Dendritic cell treated with granulocyte-macrophage colony-stimulating factor and Interleukin-4, amounts not matched to agents 40 ng/mL and 50 ng/mL, for 4 days (primary cell): ENCODE measurements at regions of chrX and their contacts with region 1.

Region 1: GRCh38 chrX:23919706-23920320 is 12.0 kb downstream of the CXorf58 start:
- H3K4me3 Mint-ChIP-seq: no peak overlapping the region
- H3K27ac Mint-ChIP-seq: no peak overlapping the region
- H3K4me1 Mint-ChIP-seq: no peaks in the 10 kb centered on the region
- H3K27me3 Mint-ChIP-seq: no peaks in the 10 kb centered on the region

Region 2: GRCh38 chrX:23883737-23884354 is 36.0 kb before region 1 on chrX:
- intact Hi-C with region 1: no loop called
- H3K4me3 Mint-ChIP-seq: peak overlapping the region; percentile 18
- H3K27ac Mint-ChIP-seq: peak overlapping the region; percentile 97
- H3K4me1 Mint-ChIP-seq: peaks cover 37% of the 10 kb centered on the region
- H3K27me3 Mint-ChIP-seq: no peaks in the 10 kb centered on the region

Region 3: DNA sequence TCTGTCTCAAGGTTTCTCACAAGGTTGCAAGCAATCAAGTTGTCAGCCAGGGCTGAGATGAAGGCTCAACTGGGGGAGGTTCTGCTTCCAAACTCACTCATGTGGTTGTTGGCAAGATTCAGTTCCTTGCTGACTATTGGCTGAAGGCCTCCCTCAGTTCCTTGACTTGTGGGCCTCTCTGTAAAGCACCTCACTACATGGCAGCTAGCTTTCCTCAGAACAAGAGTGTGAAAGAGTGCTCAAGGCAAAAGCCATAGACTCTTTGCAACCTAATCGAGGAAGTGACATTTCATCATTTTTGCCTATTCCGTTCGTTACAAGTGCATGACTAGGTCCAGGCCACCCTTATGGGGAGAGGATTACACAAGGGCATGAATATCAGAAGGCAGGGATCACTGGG is 40.0 kb after region 1 on chrX:
- intact Hi-C with region 1: loop called (anchors 10 kb)
- H3K4me3 Mint-ChIP-seq: no peak overlapping the region
- H3K27ac Mint-ChIP-seq: peak overlapping the region; percentile 41
- H3K4me1 Mint-ChIP-seq: no peaks in the 10 kb centered on the region
- H3K27me3 Mint-ChIP-seq: no peaks in the 10 kb centered on the region

Region 4: DNA sequence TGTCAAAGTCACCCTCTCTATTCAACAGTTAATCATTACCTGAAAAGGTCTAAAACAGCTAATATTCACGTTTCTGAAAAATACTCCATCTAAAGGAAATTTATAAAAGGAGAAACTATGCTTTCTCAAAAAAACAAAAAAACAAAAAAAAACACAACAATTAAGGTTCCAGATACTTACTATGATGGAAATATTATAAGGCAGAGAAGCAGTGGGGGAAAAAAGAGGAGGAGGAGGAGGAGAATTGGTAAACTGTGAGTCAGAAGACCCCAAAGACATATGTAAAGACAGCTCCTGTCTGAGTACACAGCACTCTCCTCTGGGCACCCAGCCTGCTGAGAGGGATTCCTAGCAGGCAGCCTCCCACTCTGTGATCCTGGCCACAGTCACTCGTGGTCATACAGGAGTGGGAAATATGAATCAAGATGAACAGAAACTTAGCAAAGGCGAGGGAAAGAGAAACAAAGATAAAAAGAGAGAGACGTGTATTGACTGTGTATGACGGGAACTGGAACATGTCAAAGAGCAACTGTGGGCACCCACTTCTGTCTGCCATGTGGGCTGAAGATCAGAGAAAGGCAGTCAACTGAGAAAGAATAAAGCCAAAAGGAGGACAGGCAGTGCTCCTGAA is 94.7 kb after region 1 on chrX:
- intact Hi-C with region 1: no loop called
- H3K4me3 Mint-ChIP-seq: no peak overlapping the region
- H3K27ac Mint-ChIP-seq: no peak overlapping the region
- H3K4me1 Mint-ChIP-seq: peaks cover 20% of the 10 kb centered on the region
- H3K27me3 Mint-ChIP-seq: no peaks in the 10 kb centered on the region